ENCODE measurements at regions of chr15 and their contacts with region 1.

Region 1: DNA sequence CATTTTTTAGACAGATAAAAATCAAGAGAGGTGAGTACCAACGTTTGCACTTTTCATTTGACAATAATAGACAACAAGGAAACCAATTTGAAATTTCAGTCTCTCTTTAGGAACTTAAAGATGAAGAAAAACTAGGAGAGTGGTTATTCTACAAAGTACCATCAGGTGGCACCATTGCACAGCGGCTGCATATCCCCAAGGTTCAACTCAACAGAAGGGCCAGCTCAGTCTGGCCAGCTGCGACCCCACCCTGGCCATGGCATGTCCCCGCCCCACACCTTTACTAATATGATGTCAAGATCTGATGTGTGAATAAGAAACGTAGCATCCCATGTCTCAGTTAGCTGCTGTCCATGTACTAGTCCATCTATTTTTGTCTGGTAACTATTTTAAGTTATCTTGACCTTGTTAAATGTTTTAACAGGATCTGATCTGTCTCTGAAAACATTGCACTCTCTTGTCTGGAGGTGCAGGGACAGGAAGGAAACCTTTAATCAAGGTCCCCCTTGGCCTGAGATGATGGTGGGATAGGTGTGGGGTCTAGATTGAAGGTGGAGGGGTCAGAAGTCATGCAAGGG is 35.5 kb upstream of the CGNL1 start:
- DNase-seq: peak in 4 of 9 experiments; percentile 17 to 49 (median 36)
- ATAC-seq: peak; percentile 46
- H3K4me3 ChIP-seq: no peak overlapping the region
- H3K4me3 Mint-ChIP-seq: no peak overlapping the region
- H3K27ac ChIP-seq: no peak overlapping the region
- H3K27ac Mint-ChIP-seq: no peak overlapping the region
- H3K4me1 ChIP-seq: no peaks in the 10 kb centered on the region
- H3K4me1 Mint-ChIP-seq: no peaks in the 10 kb centered on the region
- H3K27me3 ChIP-seq: no peaks in the 10 kb centered on the region
- H3K27me3 Mint-ChIP-seq: peaks cover 5% of the 10 kb centered on the region
- CTCF ChIP-seq: peak; percentile 74

Region 2: GRCh38 chr15:57353317-57353804 is 12.6 kb after region 1 on chr15:
- CTCF ChIA-PET with region 1: interaction called, 22 read pairs
- POLR2A ChIA-PET with region 1: no interaction called
- intact Hi-C with region 1: no loop called
- DNase-seq: no peak
- ATAC-seq: no peak
- H3K4me3 ChIP-seq: no peak overlapping the region
- H3K4me3 Mint-ChIP-seq: no peak overlapping the region
- H3K27ac ChIP-seq: no peak overlapping the region
- H3K27ac Mint-ChIP-seq: no peak overlapping the region
- H3K4me1 ChIP-seq: no peaks in the 10 kb centered on the region
- H3K4me1 Mint-ChIP-seq: no peaks in the 10 kb centered on the region
- H3K27me3 ChIP-seq: no peaks in the 10 kb centered on the region
- H3K27me3 Mint-ChIP-seq: peaks cover 9% of the 10 kb centered on the region
- CTCF ChIP-seq: no peak

Region 3: DNA sequence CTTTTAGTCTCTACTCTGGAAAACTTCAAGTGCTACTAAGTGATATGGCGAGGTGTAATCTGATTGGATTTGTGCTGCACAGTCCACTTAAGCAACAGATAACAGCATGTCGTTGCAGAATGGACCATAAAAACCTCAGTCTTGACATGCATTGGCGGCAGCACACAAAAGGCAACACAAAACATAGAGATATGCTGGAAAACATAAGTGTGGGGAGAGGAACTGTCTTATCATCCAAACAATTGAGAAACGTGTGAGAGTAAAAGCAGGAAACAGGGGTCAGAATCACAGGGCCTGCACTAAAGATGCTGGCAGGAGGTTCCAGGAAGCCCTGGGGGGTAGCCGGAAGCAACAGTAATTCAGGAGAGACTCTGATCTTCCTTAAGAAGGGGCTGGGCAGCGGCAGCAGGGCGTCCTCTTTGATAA is 117.6 kb after region 1 on chr15:
- CTCF ChIA-PET with region 1: no interaction called
- POLR2A ChIA-PET with region 1: no interaction called
- intact Hi-C with region 1: no loop called
- DNase-seq: no peak
- ATAC-seq: no peak
- H3K4me3 ChIP-seq: no peak overlapping the region
- H3K4me3 Mint-ChIP-seq: no peak overlapping the region
- H3K27ac ChIP-seq: no peak overlapping the region
- H3K27ac Mint-ChIP-seq: no peak overlapping the region
- H3K4me1 ChIP-seq: no peaks in the 10 kb centered on the region
- H3K4me1 Mint-ChIP-seq: no peaks in the 10 kb centered on the region
- H3K27me3 ChIP-seq: no peaks in the 10 kb centered on the region
- H3K27me3 Mint-ChIP-seq: peaks cover 3% of the 10 kb centered on the region
- CTCF ChIP-seq: no peak

Region 4: DNA sequence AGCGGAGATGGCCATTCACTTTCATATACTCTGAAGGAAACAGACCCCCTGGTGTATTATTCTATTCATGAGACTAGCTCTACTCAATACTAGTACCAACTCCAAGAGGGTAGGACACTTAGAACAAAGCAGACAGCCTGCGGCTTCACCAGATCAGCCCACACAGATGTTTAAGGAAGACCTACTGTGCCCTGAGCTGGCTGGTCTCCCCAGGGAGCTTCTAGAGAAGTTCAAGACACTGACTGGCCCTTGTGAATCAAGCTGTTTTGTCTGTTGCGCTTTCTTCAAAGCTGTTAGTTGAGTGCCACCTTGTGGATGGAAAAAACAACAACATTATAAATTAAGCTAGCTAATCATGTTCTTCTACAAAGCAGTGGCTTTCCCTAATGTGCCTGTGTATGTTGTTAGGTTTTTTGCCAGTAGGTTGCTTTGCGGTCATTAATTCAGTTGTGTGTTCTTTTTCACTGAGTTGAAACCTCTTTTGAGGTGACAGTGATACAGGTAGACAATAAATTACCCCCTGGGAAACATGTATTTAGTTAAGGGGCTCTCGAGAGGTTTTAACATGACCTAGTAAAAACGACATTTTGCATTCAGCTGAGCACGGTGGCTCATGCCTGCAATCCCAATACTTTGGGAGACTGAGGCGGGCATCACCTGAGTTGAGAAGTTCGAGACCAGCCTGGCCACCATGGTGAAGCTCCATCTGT is 186.8 kb after region 1 on chr15:
- CTCF ChIA-PET with region 1: interaction called, 15 read pairs
- POLR2A ChIA-PET with region 1: no interaction called
- intact Hi-C with region 1: loop called in 1 of 2 experiments (anchors 1 kb)
- DNase-seq: peak in 2 of 9 experiments; percentile 43 to 56
- ATAC-seq: no peak
- H3K4me3 ChIP-seq: no peak overlapping the region
- H3K4me3 Mint-ChIP-seq: no peak overlapping the region
- H3K27ac ChIP-seq: no peak overlapping the region
- H3K27ac Mint-ChIP-seq: no peak overlapping the region
- H3K4me1 ChIP-seq: no peaks in the 10 kb centered on the region
- H3K4me1 Mint-ChIP-seq: no peaks in the 10 kb centered on the region
- H3K27me3 ChIP-seq: no peaks in the 10 kb centered on the region
- H3K27me3 Mint-ChIP-seq: peaks cover 3% of the 10 kb centered on the region
- CTCF ChIP-seq: peak; percentile 56

Region 5: DNA sequence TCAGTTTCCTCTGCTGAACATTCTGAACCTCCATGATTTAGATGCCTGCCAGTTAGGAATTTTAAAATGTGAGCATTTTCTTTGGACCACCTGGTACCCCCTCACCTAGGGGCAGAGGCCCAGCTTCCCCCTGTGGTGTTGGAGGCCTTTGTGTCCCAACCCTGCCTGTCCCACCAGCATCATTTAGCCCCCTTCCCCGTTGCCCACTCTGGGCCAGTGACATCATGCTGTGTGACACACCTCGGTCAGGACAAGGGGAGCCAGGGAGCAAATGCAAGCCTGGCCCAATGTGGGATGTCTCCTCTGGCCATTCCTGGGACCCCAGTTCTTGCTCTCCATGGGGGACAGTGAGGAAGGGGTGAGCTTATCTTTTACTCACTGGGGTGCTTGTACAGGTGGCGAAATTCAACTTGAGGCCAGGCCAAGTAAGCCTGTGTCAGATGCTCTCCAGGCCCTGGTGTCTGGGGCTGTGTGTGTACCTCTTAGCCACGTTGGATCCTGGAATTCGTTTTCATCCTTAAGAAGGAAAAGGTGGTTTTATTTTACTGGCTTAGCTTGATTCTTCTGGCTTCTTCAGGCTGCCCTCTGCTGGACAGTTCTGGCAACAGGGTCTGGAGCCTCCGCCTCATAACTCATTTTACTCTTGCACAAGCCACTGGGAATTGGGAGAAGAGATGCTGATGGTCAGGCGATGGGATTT is 201.2 kb after region 1 on chr15:
- CTCF ChIA-PET with region 1: no interaction called
- POLR2A ChIA-PET with region 1: no interaction called
- intact Hi-C with region 1: loop called in 1 of 2 experiments (anchors 5 kb)
- DNase-seq: peak in 4 of 9 experiments; percentile 10 to 26 (median 16)
- ATAC-seq: no peak
- H3K4me3 ChIP-seq: no peak overlapping the region
- H3K4me3 Mint-ChIP-seq: no peak overlapping the region
- H3K27ac ChIP-seq: no peak overlapping the region
- H3K27ac Mint-ChIP-seq: no peak overlapping the region
- H3K4me1 ChIP-seq: no peaks in the 10 kb centered on the region
- H3K4me1 Mint-ChIP-seq: no peaks in the 10 kb centered on the region
- H3K27me3 ChIP-seq: no peaks in the 10 kb centered on the region
- H3K27me3 Mint-ChIP-seq: no peaks in the 10 kb centered on the region
- CTCF ChIP-seq: peak; percentile 33

Region 6: GRCh38 chr15:58282060-58282708 is 941.4 kb after region 1 on chr15:
- CTCF ChIA-PET with region 1: no interaction called
- POLR2A ChIA-PET with region 1: no interaction called
- intact Hi-C with region 1: no loop called
- DNase-seq: no peak
- ATAC-seq: no peak
- H3K4me3 ChIP-seq: no peak overlapping the region
- H3K4me3 Mint-ChIP-seq: no peak overlapping the region
- H3K27ac ChIP-seq: no peak overlapping the region
- H3K27ac Mint-ChIP-seq: no peak overlapping the region
- H3K4me1 ChIP-seq: peaks cover 7% of the 10 kb centered on the region
- H3K4me1 Mint-ChIP-seq: peaks cover 15% of the 10 kb centered on the region
- H3K27me3 ChIP-seq: no peaks in the 10 kb centered on the region
- H3K27me3 Mint-ChIP-seq: peaks cover 5% of the 10 kb centered on the region
- CTCF ChIP-seq: no peak

Measured in CD8-positive, alpha-beta T cell (primary cell).